Activated CD4-positive, alpha-beta T cell treated with anti-CD3 and anti-CD28 coated beads for 36 hours (primary cell): ENCODE measurements at regions of chr4 and their contacts with region 1.

Region 1: DNA sequence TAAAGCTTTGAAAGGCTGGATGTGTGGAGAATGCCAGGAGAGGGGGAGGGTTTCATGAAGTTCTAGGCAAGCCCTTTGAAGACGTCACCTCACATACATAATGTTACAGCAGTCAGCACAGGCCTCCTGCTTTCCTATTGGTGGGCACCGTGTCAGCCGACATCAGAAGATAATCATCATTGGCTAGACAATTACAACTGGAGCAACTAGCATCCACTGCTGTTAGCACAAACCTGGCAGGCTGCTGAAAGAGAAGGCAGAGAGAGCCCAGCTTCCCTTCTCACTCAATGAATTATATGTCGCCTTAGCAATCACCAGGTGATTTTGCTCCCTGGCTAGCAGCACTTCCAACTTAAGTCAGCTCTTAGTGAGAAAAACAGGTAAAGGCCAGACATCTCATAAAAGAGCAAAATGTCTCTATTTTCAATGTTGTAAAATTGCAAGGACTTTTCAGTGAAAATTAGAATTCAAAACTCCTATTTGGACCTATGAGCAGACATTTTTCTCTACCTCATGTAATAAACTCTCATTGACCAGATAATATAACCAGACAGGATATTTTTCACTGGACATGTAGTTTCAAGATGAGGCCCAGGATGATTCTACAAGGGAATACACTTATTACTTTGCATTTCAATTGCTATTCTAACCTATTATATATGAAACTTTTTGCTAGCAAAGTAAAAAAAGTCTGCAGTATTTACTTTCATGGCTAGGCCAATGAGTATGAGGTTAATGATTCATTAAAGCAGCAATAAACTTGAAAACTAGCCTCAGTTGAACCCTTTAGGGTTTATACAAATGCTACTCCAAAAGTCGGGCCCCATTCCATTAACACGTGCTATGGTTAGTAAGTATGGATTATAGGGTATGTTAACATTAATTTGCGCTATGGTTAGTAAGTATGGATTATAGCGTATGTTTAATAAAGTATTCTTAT is 4.3 kb downstream of the ELOVL6 start:
- DNase-seq: peak; percentile 88
- ATAC-seq: peak; percentile 87
- H3K4me3 Mint-ChIP-seq: peak overlapping the region; percentile 54
- H3K27ac Mint-ChIP-seq: peak overlapping the region; percentile 87
- H3K4me1 Mint-ChIP-seq: peaks cover 37% of the 10 kb centered on the region
- H3K27me3 Mint-ChIP-seq: no peaks in the 10 kb centered on the region

Region 2: DNA sequence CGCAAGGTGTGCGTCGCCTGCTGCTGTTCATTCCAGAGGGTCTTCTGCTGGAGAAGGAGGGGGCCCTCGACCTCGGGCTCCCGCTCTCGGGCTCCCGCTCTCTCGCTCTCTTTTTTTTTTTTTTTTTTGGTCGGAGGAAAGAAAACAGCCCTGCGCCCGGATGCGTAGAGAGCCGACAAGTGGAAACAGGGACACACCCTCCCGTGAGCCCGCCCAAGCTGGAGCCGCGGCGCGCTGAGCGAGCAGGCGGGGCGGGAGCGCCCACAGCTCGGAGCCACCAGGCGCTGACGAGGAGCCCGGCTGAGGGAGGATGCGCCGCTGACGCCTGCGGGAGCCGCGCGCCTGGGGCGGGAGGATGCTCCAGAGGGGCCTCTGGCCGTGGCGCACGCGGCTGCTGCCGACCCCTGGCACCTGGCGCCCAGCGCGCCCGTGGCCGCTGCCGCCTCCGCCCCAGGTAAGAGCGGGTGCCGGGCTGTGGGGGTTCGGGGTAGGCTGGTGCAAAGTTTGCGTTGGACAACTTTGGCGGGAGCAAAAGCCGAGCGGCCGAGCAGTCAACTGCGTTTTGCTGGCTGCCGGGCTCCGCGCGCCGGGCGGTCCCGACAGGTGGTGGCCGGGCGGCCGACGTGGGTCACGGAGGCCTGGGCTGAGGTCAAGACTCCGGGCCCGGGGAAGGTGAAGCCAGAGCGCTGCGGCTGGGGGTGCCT is 634.0 kb before region 1 on chr4 and contains the start of gene MCUB:
- CTCF ChIA-PET with region 1: no interaction called
- POLR2A ChIA-PET with region 1: no interaction called
- intact Hi-C with region 1: loop called in 1 of 2 experiments (anchors 5 kb)
- DNase-seq: peak; percentile 96
- ATAC-seq: peak; percentile 89
- H3K4me3 Mint-ChIP-seq: peak within 1 kb of the TSS; percentile 86
- H3K27ac Mint-ChIP-seq: peak within 1 kb of the TSS; percentile 97
- H3K4me1 Mint-ChIP-seq: peaks cover 49% of the 10 kb centered on the region
- H3K27me3 Mint-ChIP-seq: no peaks in the 10 kb centered on the region
- total RNA-seq, gene MCUB: 58.2 to 80.1 TPM

Region 3: DNA sequence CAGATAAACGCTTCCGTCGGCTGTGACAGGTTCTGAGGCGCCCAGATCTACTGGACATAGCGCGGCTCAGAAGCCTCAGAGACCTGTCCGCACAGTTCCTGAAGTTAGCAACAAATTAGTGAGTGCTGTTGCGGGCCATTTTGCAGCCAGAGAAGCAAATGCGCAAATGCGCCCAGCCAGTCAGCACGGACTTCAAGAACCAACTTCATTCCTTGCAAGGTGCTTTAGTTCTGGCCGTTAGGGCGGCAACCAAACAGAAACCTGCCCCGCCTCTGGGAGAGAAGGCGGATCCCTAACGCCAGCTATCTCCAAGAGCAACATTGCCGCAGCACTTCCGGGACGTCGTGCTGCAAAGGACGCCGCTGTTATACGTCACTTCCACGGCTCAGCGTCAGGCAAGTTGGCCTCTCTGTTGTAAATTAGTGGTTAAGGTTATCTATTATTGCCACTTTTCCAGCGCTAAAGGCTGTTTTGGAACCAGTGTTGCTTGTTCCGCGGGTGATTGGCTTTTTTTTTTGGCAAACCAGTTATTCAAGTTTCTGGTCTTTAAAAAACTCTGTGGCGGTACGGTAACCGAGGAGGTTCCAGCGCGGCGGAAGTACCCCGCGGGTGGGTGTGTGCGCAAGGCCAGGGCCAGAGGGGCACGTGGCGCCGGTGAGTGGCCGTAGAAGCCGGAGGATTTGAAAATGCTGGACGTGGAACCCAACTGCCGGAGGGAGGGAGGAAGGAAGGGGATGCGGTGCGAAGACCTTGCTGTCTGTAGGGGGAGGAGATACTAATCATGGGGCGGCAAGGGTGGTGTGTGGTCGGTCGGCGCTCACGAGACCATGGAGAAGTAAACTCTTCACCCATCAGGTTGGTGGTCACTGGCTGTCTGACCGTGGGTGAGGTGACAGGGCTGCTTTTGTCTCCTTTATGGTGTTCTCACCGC is 378.7 kb before region 1 on chr4 and contains the start of gene GAR1:
- CTCF ChIA-PET with region 1: interaction called, 3 read pairs
- POLR2A ChIA-PET with region 1: no interaction called
- intact Hi-C with region 1: loop called in 1 of 2 experiments (anchors 2 kb)
- DNase-seq: peak; percentile 94
- ATAC-seq: peak; percentile 92
- H3K4me3 Mint-ChIP-seq: peak within 1 kb of the TSS; percentile 99
- H3K27ac Mint-ChIP-seq: peak within 1 kb of the TSS; percentile 99
- H3K4me1 Mint-ChIP-seq: peaks cover 49% of the 10 kb centered on the region
- H3K27me3 Mint-ChIP-seq: no peaks in the 10 kb centered on the region
- total RNA-seq, gene GAR1: 37.4 to 42.2 TPM

Region 4: DNA sequence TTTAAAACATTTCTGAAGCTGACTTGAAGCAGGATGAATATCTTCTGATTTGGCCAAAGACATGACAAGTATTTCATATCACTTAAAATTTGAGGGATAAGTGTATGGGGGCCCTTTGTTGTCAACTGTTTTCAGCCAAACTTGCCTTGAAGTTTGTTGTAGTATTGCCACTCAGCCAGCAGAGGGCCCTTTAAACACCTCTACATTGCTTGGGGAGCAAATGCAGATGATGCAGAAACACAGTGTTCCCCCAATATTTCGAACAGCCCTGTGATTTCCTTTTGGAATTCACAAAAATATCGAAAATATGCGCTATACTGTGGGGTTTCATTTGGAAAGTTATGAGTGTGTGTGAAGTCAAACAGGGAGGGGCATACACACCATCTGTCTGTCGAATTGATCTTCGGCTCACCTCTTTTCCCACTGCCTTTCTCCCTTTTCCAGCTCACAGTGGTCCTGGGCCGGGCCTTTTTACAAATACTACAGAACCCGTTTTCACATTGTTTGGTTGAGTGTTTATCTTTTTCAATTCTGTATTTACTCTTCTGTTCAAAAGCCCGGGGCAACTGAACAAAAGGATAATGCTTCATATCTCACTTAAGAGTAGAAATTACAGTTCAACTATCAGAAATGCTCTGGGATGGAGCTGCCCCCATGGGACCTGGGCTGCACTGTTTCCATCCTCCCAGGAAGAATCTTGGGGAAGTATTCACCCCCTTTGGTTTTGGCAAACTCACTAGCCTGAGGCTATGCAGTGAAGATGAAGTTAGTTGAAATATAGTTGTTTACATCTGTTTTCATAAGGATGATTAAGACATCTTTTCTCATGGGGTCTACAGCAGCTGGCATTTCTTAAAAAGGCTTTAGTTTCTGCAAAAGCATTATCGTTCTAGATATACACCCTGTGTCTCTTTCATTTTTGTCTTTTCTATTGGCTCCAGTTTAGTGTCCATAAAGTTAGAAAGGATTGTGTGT is 143.9 kb before region 1 on chr4:
- CTCF ChIA-PET with region 1: interaction called, 7 read pairs
- POLR2A ChIA-PET with region 1: interaction called, 4 read pairs
- intact Hi-C with region 1: loop called (anchors 2 to 5 kb)
- DNase-seq: peak; percentile 66
- ATAC-seq: peak; percentile 50
- H3K4me3 Mint-ChIP-seq: no peak overlapping the region
- H3K27ac Mint-ChIP-seq: no peak overlapping the region
- H3K4me1 Mint-ChIP-seq: peaks cover 5% of the 10 kb centered on the region
- H3K27me3 Mint-ChIP-seq: peaks cover 2% of the 10 kb centered on the region

Region 5: DNA sequence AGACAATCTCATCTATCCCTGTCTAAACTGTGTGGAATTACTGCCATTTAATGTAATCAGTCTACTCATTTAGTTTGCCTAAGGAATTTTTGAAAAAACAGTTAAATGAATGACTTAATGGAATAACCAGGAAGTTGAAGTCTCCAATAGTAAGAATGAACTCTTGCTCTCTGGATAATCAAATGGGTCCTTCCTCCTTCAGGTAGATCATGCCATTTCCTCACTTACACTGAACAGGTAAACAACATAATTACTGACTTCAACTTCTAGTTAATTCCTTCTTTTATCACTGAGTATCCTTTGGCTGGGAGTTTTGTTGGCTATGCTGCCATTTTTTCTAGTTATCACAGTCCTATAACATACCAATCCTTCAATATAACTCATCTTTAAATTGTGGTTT is 51.6 kb before region 1 on chr4:
- CTCF ChIA-PET with region 1: no interaction called
- POLR2A ChIA-PET with region 1: no interaction called
- intact Hi-C with region 1: no loop called
- DNase-seq: no peak
- ATAC-seq: no peak
- H3K4me3 Mint-ChIP-seq: no peak overlapping the region
- H3K27ac Mint-ChIP-seq: no peak overlapping the region
- H3K4me1 Mint-ChIP-seq: no peaks in the 10 kb centered on the region
- H3K27me3 Mint-ChIP-seq: no peaks in the 10 kb centered on the region

Region 6: DNA sequence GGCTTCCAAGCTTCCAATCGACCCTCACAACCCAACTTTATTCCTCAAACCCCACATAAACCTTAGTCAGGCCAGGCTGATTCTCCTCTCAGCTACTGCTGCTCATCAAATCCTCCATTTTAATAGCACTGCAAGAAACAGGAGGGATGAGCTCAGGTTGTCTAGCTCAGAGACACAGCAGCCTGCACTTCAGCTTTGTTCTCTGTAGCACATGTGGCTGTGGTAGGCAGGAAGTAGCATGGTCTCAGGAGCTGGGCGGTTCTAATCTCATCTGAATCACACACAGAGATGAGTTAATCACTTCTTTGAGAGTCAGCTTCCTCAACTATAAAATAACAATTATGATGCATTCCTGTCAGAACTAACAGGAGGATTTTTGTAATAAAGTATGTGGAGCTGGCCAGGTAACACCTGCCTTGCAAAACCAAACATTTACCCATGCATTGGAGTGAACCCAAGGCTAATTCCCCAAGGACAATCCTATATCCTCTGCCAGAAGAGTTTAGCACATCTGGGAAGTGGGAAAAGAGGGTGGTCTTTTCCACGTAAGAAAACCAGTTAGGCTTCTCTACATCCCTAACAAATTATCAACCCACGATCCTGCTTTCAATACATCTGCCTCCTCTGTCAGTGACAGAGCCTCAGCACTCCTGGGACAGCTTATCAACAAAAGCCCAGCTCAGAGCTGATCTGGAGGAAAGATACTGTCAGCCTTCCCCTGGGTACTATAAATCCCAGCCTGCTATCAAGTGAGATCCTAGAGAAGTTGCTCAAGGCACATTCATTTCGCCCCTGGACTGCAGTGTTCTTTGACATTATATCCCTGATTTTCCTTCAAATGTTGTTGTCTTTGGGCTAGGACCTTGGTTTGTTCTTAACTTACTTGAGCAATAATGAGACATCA is 28.5 kb before region 1 on chr4:
- CTCF ChIA-PET with region 1: interaction called, 5 read pairs
- POLR2A ChIA-PET with region 1: interaction called, 7 read pairs
- intact Hi-C with region 1: loop called (anchors 1 kb)
- DNase-seq: peak; percentile 77
- ATAC-seq: peak; percentile 100
- H3K4me3 Mint-ChIP-seq: peak overlapping the region; percentile 26
- H3K27ac Mint-ChIP-seq: peak overlapping the region; percentile 98
- H3K4me1 Mint-ChIP-seq: peaks cover 34% of the 10 kb centered on the region
- H3K27me3 Mint-ChIP-seq: no peaks in the 10 kb centered on the region